Activated CD4-positive, alpha-beta memory T cell treated with anti-CD3 and anti-CD28 coated beads for 36 hours (primary cell): ENCODE measurements at regions of chr10 and their contacts with region 1.

Region 1: DNA sequence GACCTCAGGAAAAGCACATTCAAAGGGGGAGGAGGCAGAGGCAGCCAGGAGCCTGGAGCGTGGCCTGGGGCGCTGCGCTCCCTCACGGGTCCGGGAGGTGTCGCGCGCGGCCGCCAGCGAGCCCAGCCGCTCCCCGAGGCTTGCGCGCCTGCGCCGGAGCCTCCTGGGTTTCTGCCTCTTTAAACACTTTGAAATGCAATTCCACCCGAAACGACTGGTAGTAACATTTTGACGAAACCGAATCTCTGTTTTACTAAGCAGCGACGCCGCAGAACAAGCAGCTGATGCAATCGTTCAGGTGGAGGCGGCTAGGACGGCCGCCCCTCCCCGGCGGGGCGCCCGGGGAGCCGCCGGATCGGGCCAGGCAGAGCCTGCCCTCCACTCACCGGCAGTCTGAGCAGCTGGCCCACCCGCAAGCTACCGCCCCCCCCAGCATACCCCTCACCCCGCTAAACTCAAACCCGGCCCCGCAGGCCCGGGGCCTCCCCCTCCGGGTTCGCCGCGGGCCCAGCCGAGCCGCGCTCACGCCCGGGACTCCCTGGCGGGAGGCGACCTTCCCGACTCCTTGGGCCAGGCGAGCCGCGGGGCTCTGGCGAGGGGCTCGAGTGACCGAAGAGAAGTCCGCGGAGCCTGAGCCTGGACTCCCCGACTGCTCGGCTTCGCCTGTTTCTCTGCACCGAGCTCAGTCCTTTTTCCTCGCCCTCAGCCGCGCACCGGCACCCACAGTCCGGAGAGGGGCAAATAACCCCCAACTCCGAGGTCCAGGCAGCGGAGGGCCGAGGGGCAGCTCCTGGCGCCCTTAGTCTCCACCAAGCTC is 3.2 kb downstream of the MKX start:
- DNase-seq: peak; percentile 91
- H3K4me3 Mint-ChIP-seq: peak overlapping the region; percentile 74
- H3K27ac Mint-ChIP-seq: no peak overlapping the region
- H3K4me1 Mint-ChIP-seq: peaks cover 39% of the 10 kb centered on the region
- H3K27me3 Mint-ChIP-seq: peaks cover 49% of the 10 kb centered on the region

Region 2: DNA sequence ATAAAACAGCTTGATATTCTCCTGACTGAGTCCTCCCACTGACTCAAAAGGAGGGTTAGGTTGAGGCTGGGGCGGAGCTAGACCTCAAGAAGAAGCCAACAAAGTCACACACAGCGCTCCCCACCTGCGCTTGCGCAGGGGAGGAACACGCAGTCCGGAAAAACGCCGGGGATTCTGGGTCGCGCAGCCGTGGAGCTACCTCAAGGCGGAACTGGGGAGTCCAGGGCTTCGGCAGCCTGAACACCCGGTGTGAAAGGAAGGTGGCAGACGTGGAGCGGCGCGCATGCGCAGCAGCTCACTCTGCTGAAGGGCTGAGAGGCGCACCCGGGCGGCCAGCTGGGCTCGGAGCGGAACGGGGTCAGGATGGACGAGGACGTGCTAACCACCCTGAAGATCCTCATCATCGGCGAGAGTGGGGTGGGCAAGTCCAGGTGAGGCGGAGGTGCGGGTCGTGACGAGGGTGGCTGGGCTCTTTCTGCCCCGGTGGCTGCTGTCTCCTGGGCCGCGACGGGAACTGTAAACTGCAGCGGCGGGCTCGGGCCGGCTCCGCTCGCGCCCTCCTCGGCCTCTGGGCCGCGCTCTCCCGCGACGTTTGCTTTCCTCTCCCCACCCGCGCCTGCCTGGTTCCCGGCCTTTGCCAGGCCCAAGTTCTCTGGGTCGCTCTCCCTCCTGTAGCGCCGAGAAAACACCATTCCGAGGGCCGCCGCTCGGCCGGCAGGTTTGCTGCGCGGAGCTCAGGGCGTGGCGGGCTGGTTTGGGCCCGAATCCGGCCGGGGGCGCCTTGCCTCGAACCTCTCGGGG is 238.2 kb before region 1 on chr10 and contains the start of gene RAB18:
- CTCF ChIA-PET with region 1: no interaction called
- POLR2A ChIA-PET with region 1: interaction called, 3 read pairs
- intact Hi-C with region 1: loop called (anchors 5 kb)
- DNase-seq: peak; percentile 99
- H3K4me3 Mint-ChIP-seq: peak within 1 kb of the TSS; percentile 100
- H3K27ac Mint-ChIP-seq: peak within 1 kb of the TSS; percentile 96
- H3K4me1 Mint-ChIP-seq: peaks cover 51% of the 10 kb centered on the region
- H3K27me3 Mint-ChIP-seq: no peaks in the 10 kb centered on the region
- total RNA-seq, gene RAB18: 51.7 to 54.0 TPM

Region 3: GRCh38 chr10:28241741-28242399 is 499.5 kb after region 1 on chr10:
- CTCF ChIA-PET with region 1: interaction called, 33 read pairs
- POLR2A ChIA-PET with region 1: interaction called, 3 read pairs
- intact Hi-C with region 1: loop called (anchors 1 kb)
- DNase-seq: peak; percentile 37
- H3K4me3 Mint-ChIP-seq: no peak overlapping the region
- H3K27ac Mint-ChIP-seq: no peak overlapping the region
- H3K4me1 Mint-ChIP-seq: peaks cover 20% of the 10 kb centered on the region
- H3K27me3 Mint-ChIP-seq: no peaks in the 10 kb centered on the region

Region 4: DNA sequence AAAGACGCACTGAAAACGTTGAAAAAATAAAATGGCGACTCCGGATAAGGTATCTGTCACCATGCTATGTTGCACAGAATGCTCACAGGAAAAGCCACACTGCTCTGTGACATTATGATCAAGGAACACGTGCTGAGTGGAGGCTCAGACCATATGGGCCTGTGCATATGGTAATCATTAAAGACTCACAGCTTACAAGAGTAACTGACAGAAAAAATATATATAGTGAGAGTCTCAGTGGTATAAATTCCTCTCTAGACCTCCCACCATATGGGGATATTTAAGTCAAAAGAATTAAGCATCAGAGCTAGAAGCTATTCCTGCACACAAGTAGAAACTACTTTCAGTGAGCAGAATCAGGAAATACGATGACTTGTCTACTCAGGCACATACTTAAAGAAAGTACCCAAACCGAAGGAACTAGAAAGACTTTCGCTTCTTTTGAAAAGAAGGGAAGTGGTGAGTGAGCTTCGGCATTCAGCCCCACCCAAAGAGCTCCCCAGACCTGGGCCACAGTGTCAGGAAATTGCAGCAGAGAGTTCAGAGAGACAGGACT is 625.6 kb after region 1 on chr10:
- CTCF ChIA-PET with region 1: no interaction called
- POLR2A ChIA-PET with region 1: interaction called, 3 read pairs
- intact Hi-C with region 1: loop called (anchors 5 kb)
- DNase-seq: peak; percentile 76
- H3K4me3 Mint-ChIP-seq: peak overlapping the region; percentile 45
- H3K27ac Mint-ChIP-seq: peak overlapping the region; percentile 86
- H3K4me1 Mint-ChIP-seq: peaks cover 45% of the 10 kb centered on the region
- H3K27me3 Mint-ChIP-seq: no peaks in the 10 kb centered on the region

Region 5: DNA sequence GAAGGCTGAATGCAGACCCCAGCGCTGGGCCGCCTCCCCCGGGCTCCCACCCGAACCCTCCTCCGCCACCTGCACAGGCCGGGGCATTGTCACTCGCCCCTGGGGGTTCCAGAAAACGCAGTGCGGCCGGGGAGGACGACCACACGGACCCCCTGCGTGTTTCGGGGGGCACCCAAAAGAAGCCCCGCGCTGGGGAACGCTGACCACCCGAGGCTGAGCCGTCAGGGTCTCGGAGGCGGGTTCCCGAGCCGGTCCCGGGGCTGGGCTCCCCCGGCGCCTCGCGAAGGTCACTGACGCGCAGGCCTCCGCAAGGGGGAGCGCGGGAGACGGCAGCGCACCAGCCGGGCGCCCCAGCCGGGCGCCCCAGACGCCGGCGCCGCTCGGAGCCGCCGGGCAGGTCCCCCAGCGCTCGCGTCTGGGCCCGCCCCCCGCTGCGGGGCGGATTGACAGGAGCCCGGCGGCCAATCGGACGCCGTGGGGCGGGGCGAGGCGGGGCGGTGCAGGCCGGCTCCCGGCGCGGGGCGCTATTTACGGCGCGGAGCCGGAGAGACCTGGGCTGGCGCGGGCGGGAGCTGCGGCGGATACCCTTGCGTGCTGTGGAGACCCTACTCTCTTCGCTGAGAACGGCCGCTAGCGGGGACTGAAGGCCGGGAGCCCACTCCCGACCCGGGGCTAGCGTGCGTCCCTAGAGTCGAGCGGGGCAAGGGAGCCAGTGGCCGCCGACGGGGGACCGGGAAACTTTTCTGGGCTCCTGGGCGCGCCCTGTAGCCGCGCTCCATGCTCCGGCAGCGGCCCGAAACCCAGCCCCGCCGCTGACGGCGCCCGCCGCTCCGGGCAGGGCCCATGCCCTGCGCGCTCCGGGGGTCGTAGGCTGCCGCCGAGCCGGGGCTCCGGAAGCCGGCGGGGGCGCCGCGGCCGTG is 934.8 kb after region 1 on chr10 and contains the start of gene BAMBI:
- CTCF ChIA-PET with region 1: no interaction called
- POLR2A ChIA-PET with region 1: no interaction called
- intact Hi-C with region 1: loop called (anchors 10 kb)
- DNase-seq: peak; percentile 91
- H3K4me3 Mint-ChIP-seq: peak within 1 kb of the TSS; percentile 71
- H3K27ac Mint-ChIP-seq: no peak within 1 kb of the TSS
- H3K4me1 Mint-ChIP-seq: peaks cover 26% of the 10 kb centered on the region
- H3K27me3 Mint-ChIP-seq: peaks cover 48% of the 10 kb centered on the region
- total RNA-seq, gene BAMBI: 0.31 to 0.33 TPM